GM10248 (cell line): ENCODE measurements at regions of chr7 and their contacts with region 1.

Region 1: DNA sequence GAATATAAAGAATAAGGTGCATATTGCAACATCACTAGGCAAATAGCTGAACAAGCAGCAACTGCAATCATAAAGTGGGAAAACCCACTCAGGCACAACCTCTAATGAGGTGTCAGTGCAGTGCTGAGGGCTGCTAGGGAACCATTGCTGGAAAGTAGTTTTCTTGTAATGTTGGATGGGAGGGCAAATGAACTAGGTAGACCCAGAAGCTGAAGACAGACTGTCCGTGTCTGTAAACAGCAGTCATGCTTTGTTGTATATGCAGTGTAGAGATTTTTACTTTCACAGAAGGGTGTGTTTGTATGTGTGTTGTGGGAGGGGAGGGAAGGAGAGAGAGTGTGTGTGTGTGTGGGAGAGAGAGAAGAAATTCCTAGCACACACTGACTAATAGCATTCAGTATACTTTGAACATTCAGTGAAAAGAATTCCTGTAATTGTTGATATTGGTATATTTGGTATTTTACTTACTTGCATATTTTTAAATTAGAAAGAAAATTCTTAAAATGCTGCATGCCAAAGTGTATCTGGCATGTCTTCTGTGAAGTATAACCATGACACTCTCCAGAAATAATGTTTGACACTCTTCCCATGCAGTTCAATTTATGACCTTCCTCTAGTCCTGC is 28.8 kb downstream of the ITGB8 start:
- DNase-seq: no peak
- CTCF ChIP-seq: no peak

Region 2: GRCh38 chr7:20172736-20173334 is 186.6 kb before region 1 on chr7:
- CTCF ChIA-PET with region 1: no interaction called
- POLR2A ChIA-PET with region 1: interaction called, 13 read pairs
- DNase-seq: peak; percentile 37
- CTCF ChIP-seq: peak; percentile 47

Region 3: GRCh38 chr7:20330240-20330927 is 29.1 kb before region 1 on chr7 and contains the start of gene ITGB8:
- CTCF ChIA-PET with region 1: no interaction called
- POLR2A ChIA-PET with region 1: no interaction called
- DNase-seq: peak; percentile 83
- CTCF ChIP-seq: peak; percentile 10

Region 4: GRCh38 chr7:20514364-20514763 is 154.9 kb after region 1 on chr7:
- CTCF ChIA-PET with region 1: no interaction called
- POLR2A ChIA-PET with region 1: no interaction called
- DNase-seq: no peak
- CTCF ChIP-seq: no peak

Region 5: DNA sequence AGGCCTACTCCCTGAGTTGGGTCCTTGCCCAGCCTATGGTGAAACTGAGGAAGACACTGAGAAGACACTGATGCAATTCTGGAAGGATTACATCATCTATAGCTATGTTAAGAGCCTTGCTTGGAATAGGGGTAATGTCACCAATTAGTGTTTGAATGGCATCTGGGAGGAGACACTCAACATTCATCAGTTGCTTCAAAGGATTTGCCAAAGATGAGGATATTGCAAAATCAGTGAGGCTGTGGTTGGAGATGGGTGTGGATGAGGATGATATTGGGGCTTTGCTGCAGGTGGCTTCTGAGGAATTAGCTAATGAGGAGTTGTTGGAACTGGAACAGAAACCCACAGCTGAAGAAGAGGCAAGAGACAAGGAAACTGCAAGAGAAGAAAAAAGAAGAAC is 921.7 kb after region 1 on chr7:
- CTCF ChIA-PET with region 1: no interaction called
- POLR2A ChIA-PET with region 1: no interaction called
- DNase-seq: no peak
- CTCF ChIP-seq: no peak